PC-9 (cell line): ENCODE measurements at regions of chr17 and their contacts with region 1.

Region 1: DNA sequence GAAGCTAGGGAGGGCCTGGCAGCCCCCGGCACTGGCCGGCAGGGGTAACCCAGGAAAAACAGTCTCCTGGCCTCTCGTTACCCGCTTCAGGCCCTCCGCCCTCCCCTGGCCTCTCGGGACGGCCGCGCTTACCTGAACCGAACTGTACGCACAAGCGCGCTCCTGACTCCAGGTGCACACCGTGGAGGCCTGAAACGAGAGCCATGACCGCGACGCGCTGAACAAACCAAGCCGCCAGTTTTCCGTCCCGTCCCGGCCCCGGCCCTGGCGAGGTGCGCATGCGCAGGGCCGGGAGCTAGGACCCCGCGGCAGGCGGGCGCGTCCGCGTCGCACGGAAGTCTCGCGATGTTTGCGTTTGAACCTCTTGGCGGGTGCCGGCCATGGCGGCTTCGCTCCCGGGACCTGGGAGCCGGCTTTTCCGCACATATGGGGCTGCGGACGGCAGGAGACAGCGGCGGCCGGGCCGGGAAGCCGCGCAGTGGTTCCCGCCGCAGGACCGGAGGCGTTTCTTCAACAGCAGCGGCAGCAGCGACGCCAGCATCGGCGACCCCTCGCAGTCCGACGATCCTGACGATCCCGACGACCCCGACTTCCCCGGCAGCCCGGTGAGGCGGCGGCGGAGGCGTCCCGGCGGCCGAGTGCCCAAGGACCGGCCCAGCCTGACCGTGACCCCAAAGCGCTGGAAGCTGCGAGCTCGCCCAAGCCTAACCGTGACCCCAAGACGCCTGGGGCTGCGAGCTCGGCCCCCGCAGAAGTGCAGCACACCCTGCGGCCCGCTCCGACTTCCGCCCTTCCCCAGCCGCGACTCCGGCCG is at the start of gene HASPIN:
- DNase-seq: peak; percentile 77 to 91
- H3K4me3 ChIP-seq: peak within 1 kb of the TSS; percentile 76
- H3K27ac ChIP-seq: peak within 1 kb of the TSS; percentile 38
- H3K4me1 ChIP-seq: peaks cover 55% of the 10 kb centered on the region
- H3K27me3 ChIP-seq: no peaks in the 10 kb centered on the region
- CTCF ChIP-seq: peak; percentile 44; the same call in 1 of the 2 replicates
- total RNA-seq, gene HASPIN: 25.1 and 26.8 TPM in 2 replicates

Region 2: DNA sequence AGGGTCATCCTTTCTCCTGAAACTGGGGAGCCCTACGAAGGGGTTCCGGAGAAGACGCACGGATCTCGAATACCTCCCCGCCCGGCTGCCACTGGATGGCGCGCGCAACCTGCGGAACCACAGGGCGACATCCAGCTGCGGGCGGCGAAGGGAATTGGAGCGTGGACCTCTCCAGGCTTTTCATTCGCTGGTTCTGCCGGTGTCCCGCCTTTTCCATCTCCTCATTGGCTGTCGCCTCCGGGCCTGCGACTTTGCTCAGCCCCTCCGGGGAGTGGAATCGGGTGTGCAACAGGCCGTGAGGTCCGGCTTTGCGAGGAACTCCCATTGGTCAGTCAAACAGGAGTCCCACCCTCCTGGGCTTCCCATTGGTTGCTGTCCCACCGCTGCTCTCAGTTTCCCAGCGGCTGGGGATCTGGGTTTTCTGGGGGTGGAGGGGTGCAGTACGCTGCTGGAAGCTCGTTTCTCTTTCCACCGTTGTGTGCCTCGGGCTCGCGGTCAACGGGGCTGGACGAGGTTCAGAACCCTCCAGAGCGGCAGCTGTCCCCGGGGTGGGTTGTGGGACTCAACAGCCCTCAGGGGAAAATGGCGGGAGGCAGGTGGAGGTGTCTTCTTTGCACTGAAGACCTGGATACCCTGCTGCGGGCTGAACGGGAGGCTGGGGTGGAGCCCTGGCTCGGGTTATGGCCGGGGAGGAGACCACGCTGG is 674.8 kb before region 1 on chr17:
- CTCF ChIA-PET with region 1: no interaction called
- POLR2A ChIA-PET with region 1: no interaction called
- intact Hi-C with region 1: loop called (anchors 5 kb)
- DNase-seq: peak; percentile 88 to 94
- H3K4me3 ChIP-seq: peak overlapping the region; percentile 83
- H3K27ac ChIP-seq: no peak overlapping the region
- H3K4me1 ChIP-seq: no peaks in the 10 kb centered on the region; the same call in 1 of the 2 replicates
- H3K27me3 ChIP-seq: no peaks in the 10 kb centered on the region
- CTCF ChIP-seq: peak; percentile 78

Region 3: GRCh38 chr17:3502466-3502865 is 221.3 kb before region 1 on chr17:
- CTCF ChIA-PET with region 1: no interaction called
- POLR2A ChIA-PET with region 1: no interaction called
- intact Hi-C with region 1: no loop called
- DNase-seq: no peak
- H3K4me3 ChIP-seq: no peak overlapping the region
- H3K27ac ChIP-seq: no peak overlapping the region
- H3K4me1 ChIP-seq: no peaks in the 10 kb centered on the region
- H3K27me3 ChIP-seq: peaks cover 90% of the 10 kb centered on the region
- CTCF ChIP-seq: no peak

Region 4: GRCh38 chr17:3683054-3683511 is 40.7 kb before region 1 on chr17:
- CTCF ChIA-PET with region 1: no interaction called
- POLR2A ChIA-PET with region 1: no interaction called
- intact Hi-C with region 1: loop called (anchors 5 kb)
- DNase-seq: no peak
- H3K4me3 ChIP-seq: no peak overlapping the region
- H3K27ac ChIP-seq: no peak overlapping the region
- H3K4me1 ChIP-seq: no peaks in the 10 kb centered on the region
- H3K27me3 ChIP-seq: no peaks in the 10 kb centered on the region
- CTCF ChIP-seq: peak; percentile 94

Region 5: DNA sequence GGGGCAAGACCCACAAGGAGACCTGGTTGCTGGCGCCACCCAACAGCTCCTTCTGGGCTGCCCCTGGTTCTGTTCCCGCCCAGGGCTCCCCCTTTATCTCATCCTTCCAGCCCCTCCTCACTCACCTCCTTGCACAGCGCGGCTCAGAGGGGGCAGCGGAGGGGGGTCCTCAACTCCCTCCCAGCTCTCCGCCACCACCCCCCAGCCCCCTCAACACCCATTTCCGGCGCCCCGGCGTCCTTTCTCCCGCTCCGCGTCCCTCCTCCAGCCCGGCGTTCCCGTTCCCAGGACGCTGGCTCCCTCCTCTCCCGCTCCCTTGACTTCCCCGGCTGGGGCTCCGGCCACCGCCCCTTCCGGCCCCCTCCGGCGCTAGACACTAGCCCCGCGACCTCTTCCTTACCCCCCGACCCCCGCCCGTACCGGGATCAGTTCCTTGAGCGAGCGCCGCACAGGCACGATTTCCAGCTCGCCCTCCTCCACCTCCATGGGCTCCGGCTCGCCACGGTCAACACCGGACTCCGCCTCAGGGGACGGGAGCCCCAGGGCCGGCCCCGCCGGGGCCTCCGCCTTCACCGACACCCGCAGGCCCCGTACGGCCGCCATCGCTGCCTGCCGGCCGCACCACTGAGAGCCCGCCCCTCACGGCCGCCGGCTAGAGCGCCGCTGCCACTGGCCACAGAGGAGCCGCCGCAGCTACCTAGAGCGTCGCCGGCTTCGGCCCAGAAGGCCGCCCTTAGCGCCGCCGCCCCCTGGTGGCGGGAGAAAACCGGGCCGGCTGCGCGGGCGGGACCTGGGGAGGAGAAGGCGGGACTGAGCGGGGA is 122.1 kb after region 1 on chr17 and contains the start of gene NCBP3:
- CTCF ChIA-PET with region 1: interaction called, 10 read pairs
- POLR2A ChIA-PET with region 1: interaction called, 3 read pairs
- intact Hi-C with region 1: no loop called
- DNase-seq: peak; percentile 83 to 94
- H3K4me3 ChIP-seq: peak within 1 kb of the TSS; percentile 97
- H3K27ac ChIP-seq: peak within 1 kb of the TSS; percentile 51
- H3K4me1 ChIP-seq: peaks cover 10% of the 10 kb centered on the region
- H3K27me3 ChIP-seq: no peaks in the 10 kb centered on the region
- CTCF ChIP-seq: peak; percentile 95
- total RNA-seq, gene NCBP3: 48.2 and 58.5 TPM in 2 replicates

Region 6: DNA sequence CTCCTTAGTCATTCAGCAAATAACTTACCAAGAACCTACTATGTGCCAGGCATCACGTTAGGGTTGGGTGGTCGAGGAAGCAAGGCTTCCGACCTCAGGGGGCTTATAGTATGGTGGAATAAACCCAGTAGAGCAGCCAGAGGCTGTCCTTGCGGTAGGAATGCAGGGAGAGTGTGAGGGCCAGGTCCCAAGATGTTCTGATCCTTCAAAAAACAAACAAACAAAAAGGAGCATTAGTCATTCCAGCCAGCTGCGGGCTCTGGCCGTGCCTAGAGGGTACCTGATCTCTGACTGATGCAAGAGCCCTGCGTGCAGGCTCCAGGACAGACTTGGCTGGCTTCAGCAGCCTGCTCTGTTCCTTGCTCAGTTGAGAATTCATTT is 437.4 kb after region 1 on chr17:
- CTCF ChIA-PET with region 1: no interaction called
- POLR2A ChIA-PET with region 1: no interaction called
- intact Hi-C with region 1: loop called (anchors 10 kb)
- DNase-seq: peak; percentile 91 to 96
- H3K4me3 ChIP-seq: peak overlapping the region; percentile 45
- H3K27ac ChIP-seq: peak overlapping the region; percentile 95
- H3K4me1 ChIP-seq: peaks cover 48% of the 10 kb centered on the region
- H3K27me3 ChIP-seq: no peaks in the 10 kb centered on the region
- CTCF ChIP-seq: peak; percentile 55